Activated CD4-positive, alpha-beta memory T cell treated with anti-CD3 and anti-CD28 coated beads for 36 hours (primary cell): ENCODE measurements at regions of chr6 and their contacts with region 1.

Region 1: GRCh38 chr6:33700391-33701050 is 11.0 kb downstream of the UQCC2 start:
- DNase-seq: peak; percentile 84
- H3K4me3 Mint-ChIP-seq: no peak overlapping the region
- H3K27ac Mint-ChIP-seq: peak overlapping the region; percentile 73
- H3K4me1 Mint-ChIP-seq: peaks cover 37% of the 10 kb centered on the region
- H3K27me3 Mint-ChIP-seq: no peaks in the 10 kb centered on the region

Region 2: GRCh38 chr6:33579828-33580714 is 120.5 kb before region 1 on chr6 and contains the start of gene BAK1:
- CTCF ChIA-PET with region 1: interaction called, 29 read pairs
- POLR2A ChIA-PET with region 1: interaction called, 4 read pairs
- intact Hi-C with region 1: loop called (anchors 2 kb)
- DNase-seq: peak; percentile 93
- H3K4me3 Mint-ChIP-seq: peak within 1 kb of the TSS; percentile 96
- H3K27ac Mint-ChIP-seq: peak within 1 kb of the TSS; percentile 98
- H3K4me1 Mint-ChIP-seq: peaks cover 33% of the 10 kb centered on the region
- H3K27me3 Mint-ChIP-seq: no peaks in the 10 kb centered on the region
- total RNA-seq, gene BAK1: 56.3 to 57.7 TPM

Region 3: GRCh38 chr6:33683051-33683571 is 17.4 kb before region 1 on chr6:
- CTCF ChIA-PET with region 1: interaction called, 19 read pairs
- POLR2A ChIA-PET with region 1: no interaction called
- intact Hi-C with region 1: no loop called
- DNase-seq: peak; percentile 73
- H3K4me3 Mint-ChIP-seq: no peak overlapping the region
- H3K27ac Mint-ChIP-seq: peak overlapping the region; percentile 80
- H3K4me1 Mint-ChIP-seq: peaks cover 15% of the 10 kb centered on the region
- H3K27me3 Mint-ChIP-seq: no peaks in the 10 kb centered on the region